IMR-90 (cell line): ENCODE measurements at regions of chr11 and their contacts with region 1.

Region 1: GRCh38 chr11:66344550-66345315 is at the start of gene BRMS1:
- DNase-seq: peak; percentile 97
- ATAC-seq: peak; percentile 75
- H3K4me3 ChIP-seq: peak within 1 kb of the TSS; percentile 85
- H3K27ac ChIP-seq: peak within 1 kb of the TSS; percentile 79
- H3K4me1 ChIP-seq: peaks cover 12% of the 10 kb centered on the region
- H3K27me3 ChIP-seq: no peaks in the 10 kb centered on the region
- CTCF ChIP-seq: no peak
- POLR2A ChIP-seq: peak; percentile 98
- RAD21 ChIP-seq: 0 out of 2 replicates have a peak, but pooled peaks have one; percentile 22
- total RNA-seq, gene BRMS1: 57.9 and 67.2 TPM in 2 replicates

Region 2: DNA sequence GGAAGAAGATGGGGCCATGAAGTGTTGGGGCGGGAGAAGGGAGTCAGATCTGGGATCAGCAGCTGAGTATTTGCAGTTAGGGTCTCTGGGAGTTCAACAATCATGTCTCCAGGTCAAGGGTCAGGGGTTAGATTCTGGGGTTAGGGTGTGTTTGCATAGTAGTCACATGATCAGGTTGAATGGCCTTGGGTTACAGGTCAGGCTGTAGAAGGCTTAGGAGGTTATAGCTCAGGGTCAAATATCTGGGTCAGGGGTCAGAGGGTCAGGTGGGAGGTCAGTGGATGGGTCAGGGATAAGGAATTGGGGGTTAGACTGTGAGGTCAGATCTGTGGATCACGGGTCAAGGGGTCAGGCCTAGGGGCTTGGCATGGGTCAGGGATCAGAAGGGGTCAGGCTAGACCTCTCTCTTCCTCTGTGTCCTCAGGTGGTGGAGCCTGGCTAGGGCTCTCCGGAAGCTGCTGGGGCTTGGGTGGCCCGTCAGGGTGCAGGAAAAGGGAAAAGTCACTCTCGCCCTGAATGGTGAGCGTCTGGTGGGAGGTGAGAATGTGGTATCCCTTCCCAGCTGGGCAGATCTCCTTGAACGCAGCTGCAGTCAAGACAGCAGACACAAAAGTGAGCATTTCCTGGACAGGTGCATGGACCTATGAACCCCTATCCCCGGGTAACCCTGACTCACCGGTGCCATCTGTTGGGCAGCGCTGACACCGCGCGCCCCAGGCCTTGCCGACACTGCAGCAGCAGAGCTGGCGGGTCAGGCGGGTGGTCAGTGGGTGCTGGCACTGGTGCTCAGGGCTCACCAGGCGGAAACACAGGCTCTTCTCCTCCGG is 792.9 kb before region 1 on chr11:
- CTCF ChIA-PET with region 1: no interaction called
- POLR2A ChIA-PET with region 1: no interaction called
- dilution Hi-C with region 1: no loop called
- in situ Hi-C with region 1: no loop called
- intact Hi-C with region 1: no loop called
- DNase-seq: peak; percentile 22
- ATAC-seq: no peak
- H3K4me3 ChIP-seq: no peak overlapping the region
- H3K27ac ChIP-seq: no peak overlapping the region
- H3K4me1 ChIP-seq: peaks cover 16% of the 10 kb centered on the region
- H3K27me3 ChIP-seq: no peaks in the 10 kb centered on the region
- CTCF ChIP-seq: peak; percentile 34; the same call in 1 of the 2 replicates
- POLR2A ChIP-seq: no peak
- RAD21 ChIP-seq: no peak

Region 3: GRCh38 chr11:66579017-66579606 is 234.4 kb after region 1 on chr11:
- CTCF ChIA-PET with region 1: no interaction called
- POLR2A ChIA-PET with region 1: no interaction called
- dilution Hi-C with region 1: no loop called
- in situ Hi-C with region 1: no loop called
- intact Hi-C with region 1: no loop called
- DNase-seq: peak; percentile 77
- ATAC-seq: peak; percentile 93
- H3K4me3 ChIP-seq: no peak overlapping the region
- H3K27ac ChIP-seq: no peak overlapping the region
- H3K4me1 ChIP-seq: peaks cover 6% of the 10 kb centered on the region
- H3K27me3 ChIP-seq: no peaks in the 10 kb centered on the region
- CTCF ChIP-seq: peak; percentile 82
- POLR2A ChIP-seq: no peak
- RAD21 ChIP-seq: peak; percentile 85

Region 4: DNA sequence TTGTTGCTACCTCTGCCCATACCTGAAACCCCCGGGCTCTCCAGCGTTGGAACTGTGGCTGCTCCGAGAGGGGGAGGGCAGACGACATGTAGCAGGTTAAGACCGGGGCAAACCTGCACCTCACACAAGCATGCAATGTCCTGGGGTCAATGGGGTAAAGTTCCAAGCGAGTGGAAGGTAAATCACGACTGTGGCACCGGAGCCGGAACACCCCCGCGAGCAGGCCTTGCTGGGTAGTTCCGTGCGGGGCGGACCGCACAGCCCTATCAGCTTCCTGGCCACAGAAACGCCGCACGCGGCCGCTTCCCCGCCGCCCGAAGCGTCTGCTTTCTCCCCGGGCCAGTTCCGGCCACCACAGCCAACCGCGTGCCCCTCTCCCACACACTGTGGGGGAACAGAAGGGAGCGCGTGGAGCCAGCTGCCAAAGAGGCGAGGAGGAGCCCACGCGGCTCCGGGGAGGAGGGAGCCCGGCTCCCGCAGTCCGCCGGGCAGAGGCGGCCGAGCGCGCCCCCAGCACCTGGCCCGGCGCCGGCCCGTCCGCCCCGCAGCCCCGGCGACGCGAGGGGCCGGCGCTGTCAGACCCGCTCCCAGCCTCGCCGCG is 382.6 kb after region 1 on chr11:
- CTCF ChIA-PET with region 1: no interaction called
- POLR2A ChIA-PET with region 1: interaction called, 11 read pairs
- dilution Hi-C with region 1: no loop called
- in situ Hi-C with region 1: no loop called
- intact Hi-C with region 1: no loop called
- DNase-seq: peak; percentile 11
- ATAC-seq: peak; percentile 75
- H3K4me3 ChIP-seq: peak overlapping the region; percentile 39
- H3K27ac ChIP-seq: no peak overlapping the region
- H3K4me1 ChIP-seq: 0 out of 2 replicates have a peak, but pooled peaks cover 2% of the 10 kb centered on the region
- H3K27me3 ChIP-seq: peaks cover 69% of the 10 kb centered on the region
- CTCF ChIP-seq: no peak
- POLR2A ChIP-seq: no peak
- RAD21 ChIP-seq: no peak